Activated T-helper 1 cell treated with anti-CD3 and anti-CD28 coated beads, Interleukin-12 subunit alpha, Interleukin-12 subunit beta, Interleukin-2, Interleukin-4 antibody, amounts not matched to agents 30 ng/mL and 10 ng/mL and 1 ng/mL, durations not matched to agents 14 hours and 24 hours and 36 hours (primary cell): ENCODE measurements at regions of chr3 and their contacts with region 1.

Region 1: DNA sequence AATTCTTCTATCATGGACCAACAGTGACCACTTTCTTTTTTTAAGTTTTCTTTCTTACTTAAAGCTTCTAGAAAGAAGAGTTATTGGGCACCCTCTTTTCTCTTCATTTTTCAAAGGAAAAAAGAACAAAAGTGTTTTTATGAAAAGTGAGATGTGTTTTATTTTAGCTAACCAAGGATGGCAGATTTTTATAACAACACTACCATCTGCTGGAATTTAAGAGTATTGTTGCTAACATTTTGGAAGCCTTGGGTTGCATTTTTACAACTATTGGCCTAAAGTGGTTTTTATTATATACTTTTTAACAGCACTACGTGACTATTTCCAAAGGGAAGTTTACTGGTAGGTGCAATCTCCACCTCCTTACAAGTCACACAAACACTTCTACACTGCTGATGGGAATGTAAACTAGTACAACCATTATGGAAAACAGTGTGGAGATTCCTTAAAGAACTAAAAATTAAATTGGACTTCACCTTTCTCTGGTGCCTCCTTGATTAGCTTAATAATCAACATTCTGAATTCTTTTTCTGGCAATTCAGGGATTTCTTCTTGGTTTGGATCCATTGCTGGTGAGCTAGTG is 237.7 kb upstream of the AGTR1 start:
- DNase-seq: no peak
- H3K4me3 Mint-ChIP-seq: no peak overlapping the region
- H3K27ac Mint-ChIP-seq: no peak overlapping the region
- H3K4me1 Mint-ChIP-seq: no peaks in the 10 kb centered on the region
- H3K27me3 Mint-ChIP-seq: no peaks in the 10 kb centered on the region

Region 2: GRCh38 chr3:147497296-147497695 is 962.7 kb before region 1 on chr3:
- intact Hi-C with region 1: no loop called
- DNase-seq: no peak
- H3K4me3 Mint-ChIP-seq: no peak overlapping the region
- H3K27ac Mint-ChIP-seq: no peak overlapping the region
- H3K4me1 Mint-ChIP-seq: no peaks in the 10 kb centered on the region
- H3K27me3 Mint-ChIP-seq: no peaks in the 10 kb centered on the region

Region 3: DNA sequence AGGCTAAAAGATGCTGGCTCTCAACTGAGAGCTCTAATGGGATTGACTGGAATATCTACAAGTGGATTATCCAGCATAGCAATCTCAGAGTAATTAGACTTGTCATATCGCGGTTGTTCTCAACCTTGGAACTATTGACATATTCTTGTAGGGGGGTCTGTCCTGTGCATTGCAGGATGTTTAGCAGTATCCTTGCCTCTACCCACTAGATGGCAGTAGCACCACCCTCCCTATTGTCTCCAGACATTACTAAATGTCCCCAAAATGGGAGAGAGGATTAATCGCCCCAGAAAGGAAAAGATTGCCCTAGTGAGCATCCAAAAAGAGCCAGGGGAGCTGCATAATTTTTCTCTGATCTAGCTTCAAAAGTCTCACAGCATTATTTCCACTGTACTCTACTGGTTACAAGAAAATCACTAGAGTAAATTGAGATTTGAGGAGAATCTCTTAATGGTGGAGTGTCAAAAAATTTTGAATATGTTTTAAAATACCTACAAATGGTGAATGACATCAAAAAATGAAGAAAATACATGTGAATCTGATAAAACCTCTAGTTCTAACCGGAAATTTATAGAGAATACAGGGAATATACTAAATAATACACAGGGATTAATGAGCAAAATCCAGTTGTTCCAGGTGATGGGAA is 150.5 kb before region 1 on chr3:
- intact Hi-C with region 1: loop called (anchors 1 kb)
- DNase-seq: no peak
- H3K4me3 Mint-ChIP-seq: no peak overlapping the region
- H3K27ac Mint-ChIP-seq: no peak overlapping the region
- H3K4me1 Mint-ChIP-seq: no peaks in the 10 kb centered on the region
- H3K27me3 Mint-ChIP-seq: peaks cover 3% of the 10 kb centered on the region

Region 4: DNA sequence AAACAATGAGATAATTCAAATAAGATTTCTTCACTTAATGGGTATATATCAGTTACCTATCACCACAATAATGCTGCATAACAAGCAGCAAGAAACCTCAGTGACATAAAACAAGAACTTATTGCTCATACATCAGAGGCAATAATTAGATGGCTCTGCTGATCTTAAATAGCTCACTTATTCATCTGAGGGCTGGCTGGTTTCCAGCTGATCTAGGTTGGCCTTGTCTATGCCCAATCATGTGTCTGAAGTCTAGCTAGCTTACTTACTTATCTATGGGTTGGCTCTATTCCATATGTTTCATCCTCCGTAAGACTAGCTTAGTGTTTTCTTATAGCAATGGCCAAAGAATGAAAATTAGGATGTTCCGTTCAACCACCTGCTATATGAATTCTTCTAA is 128.3 kb after region 1 on chr3:
- intact Hi-C with region 1: no loop called
- DNase-seq: no peak
- H3K4me3 Mint-ChIP-seq: no peak overlapping the region
- H3K27ac Mint-ChIP-seq: no peak overlapping the region
- H3K4me1 Mint-ChIP-seq: no peaks in the 10 kb centered on the region
- H3K27me3 Mint-ChIP-seq: no peaks in the 10 kb centered on the region